Naive thymus-derived CD4-positive, alpha-beta T cell (primary cell): ENCODE measurements at regions of chr14 and their contacts with region 1.

Region 1: GRCh38 chr14:97776934-97777558 is 979.9 kb downstream of the VRK1 start:
- DNase-seq: peak in 4 of 9 donors; percentile 3 to 27 (median 21)
- ATAC-seq: peak; percentile 46
- H3K4me3 ChIP-seq: no peak overlapping the region
- H3K4me3 Mint-ChIP-seq: peak overlapping the region in 6 of 10 donors; percentile 37 to 76 (median 46)
- H3K27ac ChIP-seq: no peak overlapping the region
- H3K27ac Mint-ChIP-seq: peak overlapping the region in 6 of 9 donors; percentile 32 to 86 (median 53)
- H3K4me1 ChIP-seq: peaks cover 0 to 14% of the 10 kb centered on the region in 2 donors
- H3K4me1 Mint-ChIP-seq: peaks cover 9 to 35% (median 28%) of the 10 kb centered on the region in 7 donors
- H3K27me3 ChIP-seq: no peaks in the 10 kb centered on the region
- H3K27me3 Mint-ChIP-seq: no peaks in the 10 kb centered on the region

Region 2: DNA sequence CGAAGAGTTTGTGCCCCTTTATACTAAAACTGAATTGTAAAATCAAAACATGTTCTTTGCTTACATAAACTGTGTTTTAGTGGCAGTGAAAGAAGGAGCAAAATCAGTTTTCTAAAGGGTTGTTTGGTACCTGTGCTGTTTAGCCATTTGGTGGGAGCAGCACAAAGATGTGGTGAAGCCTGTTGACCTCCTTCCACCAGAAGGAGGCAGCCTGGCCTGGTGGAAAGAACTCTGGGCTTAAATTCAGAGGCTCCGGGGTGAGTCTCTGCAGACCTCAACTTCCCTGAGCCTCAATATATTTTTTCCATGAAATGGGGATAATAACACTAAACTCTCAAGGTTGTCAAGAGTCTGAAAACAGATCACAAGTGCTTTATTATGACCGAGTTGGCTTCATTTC is 477.4 kb before region 1 on chr14:
- CTCF ChIA-PET with region 1: no interaction called
- POLR2A ChIA-PET with region 1: no interaction called
- intact Hi-C with region 1: loop called in 1 of 2 experiments (anchors 1 kb)
- DNase-seq: peak in 5 of 9 donors; percentile 16 to 31 (median 22)
- ATAC-seq: peak; percentile 54
- H3K4me3 ChIP-seq: no peak overlapping the region
- H3K4me3 Mint-ChIP-seq: no peak overlapping the region
- H3K27ac ChIP-seq: no peak overlapping the region
- H3K27ac Mint-ChIP-seq: peak overlapping the region in 2 of 9 donors; percentile 28 to 48
- H3K4me1 ChIP-seq: peaks cover 0 to 4% of the 10 kb centered on the region in 2 donors
- H3K4me1 Mint-ChIP-seq: peaks cover 4 to 23% (median 12%) of the 10 kb centered on the region in 7 donors
- H3K27me3 ChIP-seq: no peaks in the 10 kb centered on the region
- H3K27me3 Mint-ChIP-seq: peaks cover 0 to 30% (median 0%) of the 10 kb centered on the region in 5 donors

Region 3: GRCh38 chr14:97410667-97411620 is 366.1 kb before region 1 on chr14:
- CTCF ChIA-PET with region 1: no interaction called
- POLR2A ChIA-PET with region 1: no interaction called
- intact Hi-C with region 1: loop called in 1 of 2 experiments (anchors 2 kb)
- DNase-seq: peak in 1 of 9 donors; percentile 9
- ATAC-seq: no peak
- H3K4me3 ChIP-seq: no peak overlapping the region
- H3K4me3 Mint-ChIP-seq: no peak overlapping the region
- H3K27ac ChIP-seq: no peak overlapping the region
- H3K27ac Mint-ChIP-seq: no peak overlapping the region
- H3K4me1 ChIP-seq: peaks cover 15 to 34% of the 10 kb centered on the region in 2 donors
- H3K4me1 Mint-ChIP-seq: peaks cover 0 to 30% (median 21%) of the 10 kb centered on the region in 7 donors
- H3K27me3 ChIP-seq: peaks cover 0 to 6% of the 10 kb centered on the region in 2 donors
- H3K27me3 Mint-ChIP-seq: peaks cover 0 to 11% (median 1%) of the 10 kb centered on the region in 5 donors

Region 4: DNA sequence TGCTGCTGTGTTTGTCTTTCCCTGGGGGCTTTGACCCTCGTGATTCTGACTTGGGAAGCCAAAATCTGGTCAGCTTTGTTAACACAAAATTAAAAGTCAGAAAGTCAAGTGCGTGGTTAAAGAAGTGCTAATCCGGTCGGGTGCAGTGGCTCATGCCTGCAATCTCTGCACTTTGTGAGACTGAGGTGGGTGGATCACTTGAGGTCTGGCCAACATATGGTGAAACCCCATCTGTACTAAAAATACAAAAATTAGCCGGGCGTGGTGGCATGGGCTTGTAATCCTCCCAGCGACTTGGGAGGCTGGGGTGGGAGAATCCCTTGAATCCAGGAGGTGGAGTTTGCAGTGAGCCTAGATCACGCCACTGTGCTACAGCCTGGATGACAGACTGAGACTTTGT is 135.2 kb before region 1 on chr14:
- CTCF ChIA-PET with region 1: no interaction called
- POLR2A ChIA-PET with region 1: no interaction called
- intact Hi-C with region 1: loop called in 1 of 2 experiments (anchors 5 kb)
- DNase-seq: no peak
- ATAC-seq: no peak
- H3K4me3 ChIP-seq: no peak overlapping the region
- H3K4me3 Mint-ChIP-seq: peak overlapping the region in 8 of 10 donors; percentile 3 to 77 (median 58)
- H3K27ac ChIP-seq: no peak overlapping the region
- H3K27ac Mint-ChIP-seq: peak overlapping the region in 8 of 9 donors; percentile 74 to 93 (median 84)
- H3K4me1 ChIP-seq: peaks cover 0 to 23% of the 10 kb centered on the region in 2 donors
- H3K4me1 Mint-ChIP-seq: peaks cover 35 to 74% (median 56%) of the 10 kb centered on the region in 7 donors
- H3K27me3 ChIP-seq: no peaks in the 10 kb centered on the region
- H3K27me3 Mint-ChIP-seq: peaks cover 0 to 3% (median 0%) of the 10 kb centered on the region in 5 donors

Region 5: DNA sequence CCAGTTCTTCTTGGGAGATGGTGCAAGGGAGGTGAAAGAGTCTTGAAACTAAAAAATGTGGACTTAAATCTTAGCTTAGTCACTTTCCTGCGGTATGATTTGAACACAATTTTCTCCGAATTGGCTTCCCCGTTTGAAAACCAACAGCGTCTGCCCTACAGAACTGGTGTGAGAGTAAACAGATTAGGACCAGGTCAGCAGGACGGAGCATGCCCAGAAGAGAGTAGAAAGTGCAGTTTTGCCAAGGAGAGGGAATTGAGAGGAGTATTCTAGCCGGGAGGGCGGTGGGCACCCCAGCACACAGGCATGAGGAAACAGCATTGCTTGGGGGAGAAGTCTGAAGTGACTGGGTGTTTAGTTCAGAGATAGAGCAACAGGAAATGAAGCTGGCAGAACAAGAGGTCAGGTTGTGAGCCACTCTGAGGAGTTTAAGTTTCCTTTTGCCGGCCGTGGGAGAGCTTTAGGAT is 52.7 kb before region 1 on chr14:
- CTCF ChIA-PET with region 1: interaction called, 5 read pairs
- POLR2A ChIA-PET with region 1: interaction called, 4 read pairs
- intact Hi-C with region 1: loop called in 1 of 2 experiments (anchors 5 kb)
- DNase-seq: peak in 8 of 9 donors; percentile 38 to 67 (median 59)
- ATAC-seq: peak; percentile 77
- H3K4me3 ChIP-seq: peak overlapping the region; percentile 57
- H3K4me3 Mint-ChIP-seq: peak overlapping the region; percentile 78 to 92 (median 84)
- H3K27ac ChIP-seq: peak overlapping the region; percentile 80
- H3K27ac Mint-ChIP-seq: peak overlapping the region; percentile 92 to 99 (median 97)
- H3K4me1 ChIP-seq: peaks cover 28 to 72% of the 10 kb centered on the region in 2 donors
- H3K4me1 Mint-ChIP-seq: peaks cover 51 to 94% (median 86%) of the 10 kb centered on the region in 7 donors
- H3K27me3 ChIP-seq: no peaks in the 10 kb centered on the region
- H3K27me3 Mint-ChIP-seq: no peaks in the 10 kb centered on the region

Region 6: DNA sequence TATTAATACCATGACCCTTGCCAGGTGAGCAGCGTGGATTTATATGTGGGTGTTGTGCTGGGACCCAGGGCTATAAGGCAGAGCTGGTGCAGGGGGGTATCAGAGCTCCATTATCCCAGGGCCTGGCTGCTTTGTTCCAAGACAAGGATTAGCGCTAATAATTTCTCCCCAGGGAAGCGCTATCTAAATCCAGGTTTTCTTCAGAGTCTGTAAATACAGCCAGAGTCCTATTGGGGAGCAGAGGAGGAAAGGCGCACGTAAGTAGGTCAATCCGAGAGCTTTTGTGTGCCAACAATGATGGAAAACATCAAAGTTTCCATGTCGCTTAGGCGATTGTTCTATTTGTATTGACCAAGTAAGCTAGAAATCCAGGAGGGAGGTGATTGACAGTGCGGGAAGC is 29.8 kb after region 1 on chr14:
- CTCF ChIA-PET with region 1: no interaction called
- POLR2A ChIA-PET with region 1: no interaction called
- intact Hi-C with region 1: no loop called
- DNase-seq: no peak
- ATAC-seq: no peak
- H3K4me3 ChIP-seq: no peak overlapping the region
- H3K4me3 Mint-ChIP-seq: no peak overlapping the region
- H3K27ac ChIP-seq: no peak overlapping the region
- H3K27ac Mint-ChIP-seq: peak overlapping the region in 1 of 9 donors; percentile 32
- H3K4me1 ChIP-seq: no peaks in the 10 kb centered on the region
- H3K4me1 Mint-ChIP-seq: peaks cover 0 to 6% (median 0%) of the 10 kb centered on the region in 7 donors
- H3K27me3 ChIP-seq: no peaks in the 10 kb centered on the region
- H3K27me3 Mint-ChIP-seq: peaks cover 0 to 6% (median 0%) of the 10 kb centered on the region in 5 donors

Region 7: DNA sequence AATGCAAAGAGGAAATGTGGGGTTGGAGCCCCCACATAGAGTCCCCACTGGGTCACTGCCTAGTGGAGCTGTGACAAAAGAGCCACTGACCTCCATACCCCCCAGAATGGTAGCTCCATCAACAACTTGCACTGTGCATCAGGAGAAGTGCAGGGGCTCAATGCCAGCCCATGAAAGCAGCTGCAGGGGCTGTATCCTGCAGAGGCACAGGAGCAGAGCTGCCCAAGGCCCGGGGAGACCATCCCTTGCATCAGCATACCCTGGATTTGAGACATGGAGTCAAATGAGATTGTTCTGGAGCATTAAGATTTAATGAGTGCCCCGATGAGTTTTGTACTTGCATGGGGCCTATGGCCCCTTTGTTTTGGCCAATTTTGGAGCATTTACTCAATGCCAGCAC is 43.7 kb after region 1 on chr14:
- CTCF ChIA-PET with region 1: no interaction called
- POLR2A ChIA-PET with region 1: no interaction called
- intact Hi-C with region 1: no loop called
- DNase-seq: no peak
- ATAC-seq: no peak
- H3K4me3 ChIP-seq: no peak overlapping the region
- H3K4me3 Mint-ChIP-seq: no peak overlapping the region
- H3K27ac ChIP-seq: no peak overlapping the region
- H3K27ac Mint-ChIP-seq: no peak overlapping the region
- H3K4me1 ChIP-seq: no peaks in the 10 kb centered on the region
- H3K4me1 Mint-ChIP-seq: peaks cover 4 to 11% (median 6%) of the 10 kb centered on the region in 7 donors
- H3K27me3 ChIP-seq: no peaks in the 10 kb centered on the region
- H3K27me3 Mint-ChIP-seq: no peaks in the 10 kb centered on the region